A549 (cell line): ENCODE measurements at regions of chr9 and their contacts with region 1.

Region 1: DNA sequence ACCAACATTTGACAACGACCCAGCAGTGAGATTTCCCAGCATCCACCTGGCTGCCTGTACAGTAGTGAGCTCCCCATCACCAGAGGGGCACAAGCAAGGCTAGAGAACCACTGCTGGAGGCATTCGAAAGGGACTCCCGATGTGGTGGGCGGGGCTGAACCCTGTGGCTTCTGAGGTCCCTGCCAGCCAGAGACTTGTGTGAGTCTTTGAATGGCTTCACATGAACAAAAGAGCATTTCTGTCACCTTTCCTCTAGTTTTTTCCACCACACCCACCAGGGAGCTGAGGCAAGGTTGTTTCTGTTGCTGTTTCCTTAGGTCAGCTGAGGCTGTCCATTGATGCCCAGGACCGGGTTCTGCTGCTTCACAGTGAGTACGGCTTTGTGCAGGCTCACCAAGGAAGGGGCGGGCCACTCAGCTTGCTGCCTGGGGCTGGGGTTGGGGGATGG is 15.7 kb downstream of the RGS3 start:
- DNase-seq: no peak
- ATAC-seq: no peak
- H3K4me3 ChIP-seq: no peak overlapping the region
- H3K27ac ChIP-seq: no peak overlapping the region
- H3K4me1 ChIP-seq: no peaks in the 10 kb centered on the region
- CTCF ChIP-seq: no peak
- EP300 ChIP-seq: no peak
- POLR2A ChIP-seq: no peak
- RAD21 ChIP-seq: no peak

Region 2: DNA sequence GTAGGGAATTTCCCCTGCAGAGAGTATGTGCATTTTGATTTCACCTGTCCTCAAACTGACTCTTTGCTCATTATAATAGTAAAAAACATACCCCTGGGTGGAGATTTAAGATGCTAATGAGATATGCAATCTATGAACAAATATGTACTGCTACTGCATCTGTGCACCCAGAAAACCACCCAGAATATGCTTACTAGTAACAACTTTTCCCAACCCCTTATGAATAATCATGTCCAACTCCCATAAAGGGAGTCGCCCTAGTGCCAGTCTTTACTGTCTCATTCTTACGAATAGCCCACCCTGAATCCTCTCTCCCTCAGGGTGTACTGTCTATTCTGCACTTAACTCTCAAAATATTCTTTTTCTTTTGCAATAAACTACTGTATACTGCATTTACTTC is 383.6 kb before region 1 on chr9:
- CTCF ChIA-PET with region 1: no interaction called
- POLR2A ChIA-PET with region 1: no interaction called
- DNase-seq: no peak
- ATAC-seq: no peak
- H3K4me3 ChIP-seq: no peak overlapping the region
- H3K27ac ChIP-seq: no peak overlapping the region
- H3K4me1 ChIP-seq: no peaks in the 10 kb centered on the region
- CTCF ChIP-seq: no peak
- EP300 ChIP-seq: no peak
- POLR2A ChIP-seq: no peak
- RAD21 ChIP-seq: no peak

Region 3: DNA sequence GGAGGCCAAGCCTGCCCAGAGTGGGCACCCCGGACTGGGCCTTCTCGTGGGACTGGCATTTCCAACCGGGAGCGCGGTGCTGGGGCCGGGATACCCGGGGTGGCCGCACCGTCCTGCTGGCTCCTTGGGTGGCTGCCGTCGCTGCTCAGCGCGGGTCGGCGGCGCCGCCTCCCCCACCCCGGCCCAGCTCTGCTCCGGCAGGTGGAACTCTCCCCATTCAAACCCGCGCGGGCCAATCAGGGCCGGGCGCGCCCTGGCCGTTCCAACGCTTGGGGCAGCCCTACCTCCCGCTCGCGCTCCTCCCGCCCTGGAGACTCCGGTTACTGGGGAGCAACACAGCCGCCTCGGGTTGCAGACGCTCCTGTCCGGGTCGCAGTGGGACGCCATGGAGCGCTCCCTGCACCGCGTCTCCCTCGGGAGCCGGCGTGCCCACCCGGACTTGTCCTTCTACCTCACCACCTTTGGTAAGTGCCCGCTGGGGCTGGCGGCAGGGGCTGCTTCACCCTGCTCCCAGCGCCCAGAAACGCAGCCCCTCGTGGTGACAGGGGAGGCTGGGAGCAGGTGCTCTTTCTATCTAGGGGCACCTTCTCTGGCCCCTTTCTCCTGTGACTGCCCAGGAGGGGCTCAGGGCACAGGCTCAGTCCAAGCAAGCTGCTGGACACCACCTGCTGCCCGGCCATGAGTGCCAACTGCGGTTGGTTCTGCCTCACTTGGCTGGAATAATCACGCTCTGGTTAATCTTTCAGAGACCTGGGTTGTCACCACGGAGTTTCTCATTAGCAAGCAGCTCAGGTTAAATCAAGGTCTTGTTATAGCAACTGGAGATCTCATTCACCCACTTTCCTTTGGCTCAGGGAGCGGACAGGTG is 15.5 kb before region 1 on chr9 and contains the start of gene RGS3:
- CTCF ChIA-PET with region 1: interaction called, 10 read pairs
- POLR2A ChIA-PET with region 1: no interaction called
- DNase-seq: peak; percentile 68 to 83
- ATAC-seq: peak; percentile 96 to 97
- H3K4me3 ChIP-seq: peak within 1 kb of the TSS; percentile 69
- H3K27ac ChIP-seq: peak within 1 kb of the TSS; percentile 77 to 89
- H3K4me1 ChIP-seq: peaks cover 25% of the 10 kb centered on the region
- CTCF ChIP-seq: no peak
- EP300 ChIP-seq: no peak
- POLR2A ChIP-seq: no peak
- RAD21 ChIP-seq: 0 out of 5 replicates have a peak, but pooled peaks of 1 of the 2 experiments have one; percentile 11
- polyA plus RNA-seq, gene RGS3: 19.6 and 21.5 TPM in 2 replicates

Region 4: GRCh38 chr9:113622600-113623400 is 143.6 kb after region 1 on chr9:
- CTCF ChIA-PET with region 1: no interaction called
- POLR2A ChIA-PET with region 1: no interaction called
- DNase-seq: peak; percentile 60 to 74
- ATAC-seq: peak; percentile 80 to 82
- H3K4me3 ChIP-seq: no peak overlapping the region
- H3K27ac ChIP-seq: peak overlapping the region; percentile 30 to 77; a peak in 5 of 6 replicates
- H3K4me1 ChIP-seq: peaks cover 43% of the 10 kb centered on the region
- CTCF ChIP-seq: no peak
- EP300 ChIP-seq: no peak
- POLR2A ChIP-seq: no peak
- RAD21 ChIP-seq: no peak